ENCODE measurements at regions of chr19 and their contacts with region 1.

Region 1: GRCh38 chr19:17539238-17540117 is 16.0 kb upstream of the COLGALT1 start:
- DNase-seq: no peak
- H3K4me3 ChIP-seq: peak overlapping the region; percentile 45 to 73
- H3K27ac ChIP-seq: peak overlapping the region; percentile 62
- H3K4me1 ChIP-seq: peaks cover 11% of the 10 kb centered on the region
- H3K27me3 ChIP-seq: no peaks in the 10 kb centered on the region
- CTCF ChIP-seq: peak in 1 of 3 experiments; percentile 24
- POLR2A ChIP-seq: no peak

Region 2: GRCh38 chr19:17570791-17571190 is 31.3 kb after region 1 on chr19:
- intact Hi-C with region 1: loop called (anchors 5 kb)
- DNase-seq: no peak
- H3K4me3 ChIP-seq: no peak overlapping the region
- H3K27ac ChIP-seq: no peak overlapping the region
- H3K4me1 ChIP-seq: no peaks in the 10 kb centered on the region
- H3K27me3 ChIP-seq: no peaks in the 10 kb centered on the region
- CTCF ChIP-seq: no peak
- POLR2A ChIP-seq: no peak

Region 3: GRCh38 chr19:17641181-17641580 is 101.7 kb after region 1 on chr19:
- intact Hi-C with region 1: no loop called
- DNase-seq: no peak
- H3K4me3 ChIP-seq: no peak overlapping the region
- H3K27ac ChIP-seq: no peak overlapping the region
- H3K4me1 ChIP-seq: no peaks in the 10 kb centered on the region
- H3K27me3 ChIP-seq: no peaks in the 10 kb centered on the region
- CTCF ChIP-seq: no peak
- POLR2A ChIP-seq: no peak

Measured in vagina (tissue), 2 donors.